ENCODE measurements at regions of chr1 and their contacts with region 1.

Region 1: DNA sequence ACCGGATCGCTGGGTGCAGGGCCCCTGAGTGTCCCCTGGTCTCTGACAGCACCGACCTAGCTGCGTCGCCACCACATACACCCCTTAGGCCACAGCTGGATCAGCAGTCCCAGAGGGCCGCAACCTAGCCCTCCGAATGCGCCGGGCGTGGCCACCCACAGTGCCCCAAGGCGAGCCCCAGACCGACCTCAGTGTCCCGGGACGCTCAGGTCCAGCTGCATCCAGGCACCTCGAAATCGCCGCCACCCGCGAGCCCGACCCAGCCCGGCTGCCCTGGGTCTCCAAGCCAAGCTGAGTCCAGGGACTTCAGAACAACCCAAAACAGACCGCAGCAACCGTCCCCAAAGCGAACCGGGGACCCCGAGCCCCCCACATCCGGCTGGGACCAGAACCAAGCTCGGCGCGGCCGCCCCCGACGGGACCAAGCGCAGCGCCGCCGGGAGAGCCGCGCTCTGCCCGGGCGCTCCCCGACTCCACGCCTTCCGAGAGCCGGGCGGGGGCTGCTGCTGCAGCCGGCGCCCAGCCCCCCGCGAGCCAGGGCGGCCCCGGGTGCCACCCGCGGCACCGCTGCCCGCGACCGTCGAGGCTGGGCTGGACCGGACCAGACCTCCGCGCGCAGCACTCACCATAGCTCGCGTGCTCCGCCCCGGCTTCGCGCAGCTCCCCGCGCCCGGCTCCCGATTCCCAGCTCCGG is 54.6 kb upstream of the ECE1 start:
- DNase-seq: no peak
- H3K4me3 Mint-ChIP-seq: peak overlapping the region; percentile 92
- H3K27ac Mint-ChIP-seq: peak overlapping the region; percentile 92
- H3K4me1 Mint-ChIP-seq: peaks cover 39% of the 10 kb centered on the region
- H3K27me3 Mint-ChIP-seq: no peaks in the 10 kb centered on the region

Region 2: GRCh38 chr1:21324368-21325141 is 20.3 kb before region 1 on chr1:
- CTCF ChIA-PET with region 1: interaction called, 6 read pairs
- intact Hi-C with region 1: loop called (anchors 1 kb)
- DNase-seq: peak; percentile 89
- H3K4me3 Mint-ChIP-seq: peak overlapping the region; percentile 63
- H3K27ac Mint-ChIP-seq: peak overlapping the region; percentile 97
- H3K4me1 Mint-ChIP-seq: peaks cover 90% of the 10 kb centered on the region
- H3K27me3 Mint-ChIP-seq: no peaks in the 10 kb centered on the region

Region 3: GRCh38 chr1:21334214-21335087 is 10.4 kb before region 1 on chr1:
- CTCF ChIA-PET with region 1: interaction called, 11 read pairs
- intact Hi-C with region 1: loop called (anchors 1 kb)
- DNase-seq: peak; percentile 86
- H3K4me3 Mint-ChIP-seq: peak overlapping the region; percentile 87
- H3K27ac Mint-ChIP-seq: peak overlapping the region; percentile 99
- H3K4me1 Mint-ChIP-seq: peaks cover 91% of the 10 kb centered on the region
- H3K27me3 Mint-ChIP-seq: no peaks in the 10 kb centered on the region